ENCODE measurements at regions of chr16 and their contacts with region 1.

Region 1: GRCh38 chr16:6143020-6143419 is 1045.4 kb upstream of the EEF2KMT start:
- DNase-seq: no peak
- ATAC-seq: no peak
- H3K4me3 ChIP-seq: no peak overlapping the region
- H3K4me3 Mint-ChIP-seq: no peak overlapping the region
- H3K27ac ChIP-seq: no peak overlapping the region
- H3K27ac Mint-ChIP-seq: no peak overlapping the region
- H3K4me1 ChIP-seq: no peaks in the 10 kb centered on the region
- H3K4me1 Mint-ChIP-seq: no peaks in the 10 kb centered on the region
- H3K27me3 ChIP-seq: no peaks in the 10 kb centered on the region
- H3K27me3 Mint-ChIP-seq: no peaks in the 10 kb centered on the region
- CTCF ChIP-seq: no peak

Region 2: GRCh38 chr16:6160303-6160702 is 17.3 kb after region 1 on chr16:
- intact Hi-C with region 1: loop called (anchors 2 kb)
- DNase-seq: no peak
- ATAC-seq: no peak
- H3K4me3 ChIP-seq: no peak overlapping the region
- H3K4me3 Mint-ChIP-seq: no peak overlapping the region
- H3K27ac ChIP-seq: no peak overlapping the region
- H3K27ac Mint-ChIP-seq: no peak overlapping the region
- H3K4me1 ChIP-seq: no peaks in the 10 kb centered on the region
- H3K4me1 Mint-ChIP-seq: no peaks in the 10 kb centered on the region
- H3K27me3 ChIP-seq: no peaks in the 10 kb centered on the region
- H3K27me3 Mint-ChIP-seq: no peaks in the 10 kb centered on the region
- CTCF ChIP-seq: no peak

Measured in natural killer cell (primary cell).